CD8-positive, alpha-beta T cell (primary cell): ENCODE measurements at regions of chr19 and their contacts with region 1.

Region 1: DNA sequence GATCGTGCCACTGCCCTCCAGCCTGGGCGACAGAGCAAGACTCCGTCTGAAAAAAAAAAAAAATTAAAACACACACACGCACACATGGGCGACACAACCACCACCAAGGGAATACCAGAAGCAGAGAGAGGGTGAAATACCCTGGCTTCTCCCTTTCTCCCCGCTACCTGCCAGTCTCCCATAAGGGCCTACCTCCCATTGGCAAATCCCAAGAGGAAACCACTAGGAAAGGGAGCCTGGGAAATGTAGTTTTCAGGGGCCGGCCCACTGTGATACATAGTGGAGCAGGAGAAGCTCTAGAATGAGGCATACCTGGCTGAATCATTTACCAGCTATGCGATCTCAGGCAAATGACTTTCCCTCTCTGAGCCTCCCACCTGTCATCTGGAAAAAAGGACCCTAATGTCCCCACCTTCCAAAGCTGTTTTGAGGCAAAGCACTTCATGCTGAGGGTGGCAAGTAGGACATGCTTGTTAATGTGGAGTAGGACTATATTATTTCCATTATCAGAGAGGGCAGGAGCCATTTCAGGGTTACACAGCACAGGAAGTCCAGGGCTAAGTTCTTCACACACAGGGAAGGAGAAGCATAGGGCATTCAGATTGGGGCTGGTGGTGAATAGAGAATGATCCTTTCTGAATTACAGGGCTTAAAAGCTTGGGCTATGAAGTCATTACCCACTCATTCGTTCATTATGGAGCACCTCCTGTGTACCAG is 14.3 kb upstream of the HNRNPUL1 start:
- DNase-seq: no peak
- ATAC-seq: no peak
- H3K4me3 ChIP-seq: no peak overlapping the region
- H3K4me3 Mint-ChIP-seq: no peak overlapping the region
- H3K27ac ChIP-seq: no peak overlapping the region
- H3K27ac Mint-ChIP-seq: no peak overlapping the region
- H3K4me1 ChIP-seq: no peaks in the 10 kb centered on the region
- H3K4me1 Mint-ChIP-seq: no peaks in the 10 kb centered on the region
- H3K27me3 ChIP-seq: no peaks in the 10 kb centered on the region
- H3K27me3 Mint-ChIP-seq: peaks cover 8% of the 10 kb centered on the region
- CTCF ChIP-seq: no peak

Region 2: GRCh38 chr19:41218615-41219507 is 31.0 kb before region 1 on chr19 and contains the start of gene AXL:
- CTCF ChIA-PET with region 1: no interaction called
- POLR2A ChIA-PET with region 1: no interaction called
- intact Hi-C with region 1: loop called in 1 of 2 experiments (anchors 2 kb)
- DNase-seq: no peak
- ATAC-seq: no peak
- H3K4me3 ChIP-seq: no peak within 1 kb of the TSS
- H3K4me3 Mint-ChIP-seq: no peak within 1 kb of the TSS
- H3K27ac ChIP-seq: no peak within 1 kb of the TSS
- H3K27ac Mint-ChIP-seq: no peak within 1 kb of the TSS
- H3K4me1 ChIP-seq: no peaks in the 10 kb centered on the region
- H3K4me1 Mint-ChIP-seq: peaks cover 4% of the 10 kb centered on the region
- H3K27me3 ChIP-seq: peaks cover 0 to 17% of the 10 kb centered on the region in 2 experiments
- H3K27me3 Mint-ChIP-seq: peaks cover 36% of the 10 kb centered on the region
- CTCF ChIP-seq: no peak
- total RNA-seq, gene AXL: 0.22 TPM in 1 of 2 experiments, not detected in the other